Naive thymus-derived CD4-positive, alpha-beta T cell (primary cell): ENCODE measurements at regions of chr21 and their contacts with region 1.

Region 1: GRCh38 chr21:31161157-31161556 is 122.9 kb upstream of the KRTAP19-8 start:
- DNase-seq: peak in 1 of 9 donors; percentile 35
- ATAC-seq: peak; percentile 28
- H3K4me3 ChIP-seq: no peak overlapping the region
- H3K4me3 Mint-ChIP-seq: peak overlapping the region; percentile 14 to 88 (median 77)
- H3K27ac ChIP-seq: peak overlapping the region; percentile 69
- H3K27ac Mint-ChIP-seq: peak overlapping the region; percentile 13 to 99 (median 95)
- H3K4me1 ChIP-seq: peaks cover 0 to 84% of the 10 kb centered on the region in 2 donors
- H3K4me1 Mint-ChIP-seq: peaks cover 52 to 94% (median 92%) of the 10 kb centered on the region in 7 donors
- H3K27me3 ChIP-seq: no peaks in the 10 kb centered on the region
- H3K27me3 Mint-ChIP-seq: no peaks in the 10 kb centered on the region

Region 2: GRCh38 chr21:31072533-31072932 is 88.6 kb before region 1 on chr21:
- CTCF ChIA-PET with region 1: no interaction called
- POLR2A ChIA-PET with region 1: no interaction called
- intact Hi-C with region 1: no loop called
- DNase-seq: no peak
- ATAC-seq: no peak
- H3K4me3 ChIP-seq: no peak overlapping the region
- H3K4me3 Mint-ChIP-seq: no peak overlapping the region
- H3K27ac ChIP-seq: no peak overlapping the region
- H3K27ac Mint-ChIP-seq: no peak overlapping the region
- H3K4me1 ChIP-seq: no peaks in the 10 kb centered on the region
- H3K4me1 Mint-ChIP-seq: peaks cover 0 to 2% (median 0%) of the 10 kb centered on the region in 7 donors
- H3K27me3 ChIP-seq: no peaks in the 10 kb centered on the region
- H3K27me3 Mint-ChIP-seq: peaks cover 0 to 27% (median 13%) of the 10 kb centered on the region in 5 donors

Region 3: DNA sequence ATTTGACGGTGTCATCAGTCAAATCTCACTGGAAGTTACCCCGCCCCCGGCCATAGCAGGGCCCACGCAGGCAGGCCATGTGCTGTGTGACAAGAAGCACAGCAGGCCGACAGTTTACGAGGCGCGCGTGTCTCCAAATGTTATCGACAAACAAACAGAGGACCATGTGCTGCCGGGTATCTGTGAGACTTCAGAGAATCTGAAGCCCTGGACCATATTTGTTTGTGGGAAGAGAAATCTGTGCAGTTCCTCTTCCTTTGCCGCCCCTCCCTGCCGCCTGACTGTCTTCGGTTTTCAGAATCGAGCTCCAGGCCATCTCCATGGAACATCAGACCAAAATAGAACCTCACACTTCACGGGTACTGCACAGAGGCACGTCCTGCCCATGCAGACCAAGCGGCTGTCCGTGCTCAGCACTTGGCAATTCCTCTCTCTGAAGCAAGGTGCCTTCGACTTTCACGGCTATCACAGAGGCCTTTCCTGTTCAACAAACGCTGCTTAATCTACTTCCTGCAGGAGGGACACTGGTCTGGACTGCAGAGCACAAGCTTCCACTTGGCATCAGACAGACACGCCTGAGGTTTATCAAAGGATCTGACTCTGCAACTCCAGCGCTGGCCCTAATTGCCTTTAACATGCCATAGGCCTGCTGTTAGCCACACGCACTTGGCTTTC is 12.9 kb after region 1 on chr21:
- CTCF ChIA-PET with region 1: interaction called, 106 read pairs
- POLR2A ChIA-PET with region 1: interaction called, 332 read pairs
- intact Hi-C with region 1: loop called in 1 of 2 experiments (anchors 1 kb)
- DNase-seq: peak in 5 of 9 donors; percentile 41 to 64 (median 45)
- ATAC-seq: peak; percentile 69
- H3K4me3 ChIP-seq: peak overlapping the region; percentile 48
- H3K4me3 Mint-ChIP-seq: peak overlapping the region; percentile 79 to 93 (median 86)
- H3K27ac ChIP-seq: peak overlapping the region; percentile 71
- H3K27ac Mint-ChIP-seq: peak overlapping the region; percentile 80 to 98 (median 94)
- H3K4me1 ChIP-seq: peaks cover 7 to 83% of the 10 kb centered on the region in 2 donors
- H3K4me1 Mint-ChIP-seq: peaks cover 56 to 99% (median 84%) of the 10 kb centered on the region in 7 donors
- H3K27me3 ChIP-seq: no peaks in the 10 kb centered on the region
- H3K27me3 Mint-ChIP-seq: no peaks in the 10 kb centered on the region